CD8-positive, alpha-beta T cell (primary cell): ENCODE measurements at regions of chr10 and their contacts with region 1.

Region 1: DNA sequence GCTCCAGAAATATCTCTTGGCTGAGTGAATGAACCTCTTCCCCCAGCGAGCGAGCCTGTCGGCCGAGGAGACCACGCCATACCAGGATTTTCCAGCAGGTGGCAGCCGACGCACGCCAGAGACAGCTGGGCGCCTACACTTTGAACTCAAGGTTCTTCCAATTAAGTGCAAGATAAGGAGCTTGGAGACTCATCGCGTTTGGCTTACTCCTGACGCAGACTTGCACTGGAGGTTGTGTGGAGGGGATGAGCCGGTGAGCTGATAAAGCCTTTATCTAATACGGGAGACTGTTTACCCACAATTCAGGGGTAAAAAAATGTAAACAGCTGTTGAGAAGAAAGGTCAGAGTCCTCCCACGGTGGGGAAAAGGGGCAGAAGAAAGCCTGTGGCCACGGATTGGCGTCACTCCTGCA is 45.9 kb upstream of the EMX2 start:
- DNase-seq: peak; percentile 41 to 81 (median 67)
- ATAC-seq: peak; percentile 66
- H3K4me3 ChIP-seq: no peak overlapping the region
- H3K4me3 Mint-ChIP-seq: no peak overlapping the region
- H3K27ac ChIP-seq: no peak overlapping the region
- H3K27ac Mint-ChIP-seq: no peak overlapping the region
- H3K4me1 ChIP-seq: no peaks in the 10 kb centered on the region
- H3K4me1 Mint-ChIP-seq: peaks cover 1% of the 10 kb centered on the region
- H3K27me3 ChIP-seq: no peaks in the 10 kb centered on the region
- H3K27me3 Mint-ChIP-seq: peaks cover 28% of the 10 kb centered on the region
- CTCF ChIP-seq: peak; percentile 91

Region 2: GRCh38 chr10:117477961-117478670 is 18.5 kb before region 1 on chr10:
- CTCF ChIA-PET with region 1: interaction called, 11 read pairs
- POLR2A ChIA-PET with region 1: no interaction called
- intact Hi-C with region 1: no loop called
- DNase-seq: no peak
- ATAC-seq: no peak
- H3K4me3 ChIP-seq: no peak overlapping the region
- H3K4me3 Mint-ChIP-seq: no peak overlapping the region
- H3K27ac ChIP-seq: no peak overlapping the region
- H3K27ac Mint-ChIP-seq: no peak overlapping the region
- H3K4me1 ChIP-seq: no peaks in the 10 kb centered on the region
- H3K4me1 Mint-ChIP-seq: no peaks in the 10 kb centered on the region
- H3K27me3 ChIP-seq: no peaks in the 10 kb centered on the region
- H3K27me3 Mint-ChIP-seq: peaks cover 12% of the 10 kb centered on the region
- CTCF ChIP-seq: no peak

Region 3: GRCh38 chr10:118106426-118106825 is 609.8 kb after region 1 on chr10:
- CTCF ChIA-PET with region 1: interaction called, 3 read pairs
- POLR2A ChIA-PET with region 1: no interaction called
- intact Hi-C with region 1: loop called in 1 of 2 experiments (anchors 2 kb)
- DNase-seq: peak in 2 of 9 experiments; percentile 2 to 12
- ATAC-seq: no peak
- H3K4me3 ChIP-seq: no peak overlapping the region
- H3K4me3 Mint-ChIP-seq: no peak overlapping the region
- H3K27ac ChIP-seq: no peak overlapping the region
- H3K27ac Mint-ChIP-seq: no peak overlapping the region
- H3K4me1 ChIP-seq: no peaks in the 10 kb centered on the region
- H3K4me1 Mint-ChIP-seq: no peaks in the 10 kb centered on the region
- H3K27me3 ChIP-seq: peaks cover 0 to 2% of the 10 kb centered on the region in 2 experiments
- H3K27me3 Mint-ChIP-seq: peaks cover 8% of the 10 kb centered on the region
- CTCF ChIP-seq: no peak

Region 4: GRCh38 chr10:118241229-118242137 is 744.9 kb after region 1 on chr10:
- CTCF ChIA-PET with region 1: interaction called, 142 read pairs
- POLR2A ChIA-PET with region 1: no interaction called
- intact Hi-C with region 1: loop called in 1 of 2 experiments (anchors 1 kb)
- DNase-seq: peak; percentile 21 to 76 (median 63)
- ATAC-seq: no peak
- H3K4me3 ChIP-seq: no peak overlapping the region
- H3K4me3 Mint-ChIP-seq: no peak overlapping the region
- H3K27ac ChIP-seq: no peak overlapping the region
- H3K27ac Mint-ChIP-seq: no peak overlapping the region
- H3K4me1 ChIP-seq: no peaks in the 10 kb centered on the region
- H3K4me1 Mint-ChIP-seq: no peaks in the 10 kb centered on the region
- H3K27me3 ChIP-seq: peaks cover 0 to 9% of the 10 kb centered on the region in 2 experiments
- H3K27me3 Mint-ChIP-seq: peaks cover 34% of the 10 kb centered on the region
- CTCF ChIP-seq: peak; percentile 97

Region 5: GRCh38 chr10:118423800-118424479 is 927.3 kb after region 1 on chr10:
- CTCF ChIA-PET with region 1: interaction called, 3 read pairs
- POLR2A ChIA-PET with region 1: no interaction called
- intact Hi-C with region 1: loop called in 1 of 2 experiments (anchors 1 kb)
- DNase-seq: peak; percentile 10 to 69 (median 55)
- ATAC-seq: peak; percentile 69
- H3K4me3 ChIP-seq: no peak overlapping the region
- H3K4me3 Mint-ChIP-seq: no peak overlapping the region
- H3K27ac ChIP-seq: no peak overlapping the region
- H3K27ac Mint-ChIP-seq: no peak overlapping the region
- H3K4me1 ChIP-seq: no peaks in the 10 kb centered on the region
- H3K4me1 Mint-ChIP-seq: no peaks in the 10 kb centered on the region
- H3K27me3 ChIP-seq: no peaks in the 10 kb centered on the region
- H3K27me3 Mint-ChIP-seq: peaks cover 16% of the 10 kb centered on the region
- CTCF ChIP-seq: peak; percentile 68

Region 6: DNA sequence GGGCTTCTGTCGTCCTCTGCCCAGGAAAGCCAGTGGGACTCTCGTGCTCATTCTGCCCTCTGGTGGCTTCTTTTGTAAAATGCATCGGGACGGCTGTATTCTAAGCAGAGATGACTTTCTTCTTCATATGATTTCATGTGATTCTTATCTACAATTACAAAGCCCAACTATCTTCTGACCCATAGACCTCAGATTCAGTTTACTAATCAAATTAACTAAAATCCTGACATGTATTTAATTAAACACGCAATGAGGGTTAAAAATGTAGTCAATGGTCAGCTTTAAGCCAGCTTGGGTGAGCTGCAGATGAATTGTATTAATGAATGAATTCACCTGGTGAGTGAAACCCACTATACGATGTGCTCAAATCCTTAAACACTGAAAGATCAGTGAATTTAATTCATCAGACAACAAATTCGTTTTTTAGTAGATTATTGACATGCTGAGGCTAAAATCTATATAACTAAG is 963.1 kb after region 1 on chr10:
- CTCF ChIA-PET with region 1: interaction called, 41 read pairs
- POLR2A ChIA-PET with region 1: no interaction called
- intact Hi-C with region 1: loop called in 1 of 2 experiments (anchors 1 kb)
- DNase-seq: peak in 8 of 9 experiments; percentile 21 to 61 (median 50)
- ATAC-seq: no peak
- H3K4me3 ChIP-seq: no peak overlapping the region
- H3K4me3 Mint-ChIP-seq: peak overlapping the region; percentile 60
- H3K27ac ChIP-seq: no peak overlapping the region
- H3K27ac Mint-ChIP-seq: no peak overlapping the region
- H3K4me1 ChIP-seq: no peaks in the 10 kb centered on the region
- H3K4me1 Mint-ChIP-seq: peaks cover 6% of the 10 kb centered on the region
- H3K27me3 ChIP-seq: no peaks in the 10 kb centered on the region
- H3K27me3 Mint-ChIP-seq: peaks cover 40% of the 10 kb centered on the region
- CTCF ChIP-seq: peak; percentile 67

Region 7: GRCh38 chr10:118543714-118544400 is 1047.2 kb after region 1 on chr10:
- CTCF ChIA-PET with region 1: interaction called, 6 read pairs
- POLR2A ChIA-PET with region 1: no interaction called
- intact Hi-C with region 1: loop called in 1 of 2 experiments (anchors 2 kb)
- DNase-seq: peak in 6 of 9 experiments; percentile 14 to 48 (median 32)
- ATAC-seq: peak; percentile 52
- H3K4me3 ChIP-seq: no peak overlapping the region
- H3K4me3 Mint-ChIP-seq: no peak overlapping the region
- H3K27ac ChIP-seq: no peak overlapping the region
- H3K27ac Mint-ChIP-seq: no peak overlapping the region
- H3K4me1 ChIP-seq: no peaks in the 10 kb centered on the region
- H3K4me1 Mint-ChIP-seq: no peaks in the 10 kb centered on the region
- H3K27me3 ChIP-seq: peaks cover 0 to 12% of the 10 kb centered on the region in 2 experiments
- H3K27me3 Mint-ChIP-seq: peaks cover 41% of the 10 kb centered on the region
- CTCF ChIP-seq: peak; percentile 38